ENCODE measurements at regions of chr11 and their contacts with region 1.

Region 1: DNA sequence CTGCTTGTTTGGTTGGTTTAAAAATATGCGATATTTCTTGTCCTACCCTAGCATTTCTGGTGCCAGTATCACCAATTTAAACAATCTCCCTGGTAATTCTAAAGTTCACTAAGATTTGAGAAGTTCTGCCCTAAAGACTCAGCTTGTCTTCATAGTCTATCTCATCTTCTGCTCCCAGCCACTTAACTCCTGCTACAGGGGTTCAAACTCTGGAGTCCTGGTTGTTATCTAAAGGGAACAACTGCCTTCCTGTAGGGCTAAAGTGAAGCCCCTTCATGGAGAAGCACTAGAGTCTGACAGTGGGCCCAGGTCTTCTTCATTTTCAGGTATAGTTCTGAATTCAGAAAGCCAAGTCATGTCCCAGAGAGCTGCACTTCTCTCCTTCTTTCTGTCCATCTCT is 73.2 kb downstream of the CTNND1 start:
- DNase-seq: peak in 1 of 4 experiments; percentile 19
- ATAC-seq: peak; percentile 21; the same call in 1 of the 3 replicates
- H3K4me3 ChIP-seq: no peak overlapping the region
- H3K27ac ChIP-seq: no peak overlapping the region
- H3K4me1 ChIP-seq: peaks cover 0 to 4% of the 10 kb centered on the region in 2 experiments; a peak in 2 of 5 replicates
- H3K27me3 ChIP-seq: peaks cover 0 to 7% of the 10 kb centered on the region in 2 experiments; a peak in 3 of 5 replicates
- CTCF ChIP-seq: no peak
- EP300 ChIP-seq: no peak
- POLR2A ChIP-seq: no peak
- RAD21 ChIP-seq: no peak

Region 2: GRCh38 chr11:57703341-57703740 is 131.5 kb before region 1 on chr11:
- CTCF ChIA-PET with region 1: no interaction called
- POLR2A ChIA-PET with region 1: no interaction called
- in situ Hi-C with region 1: no loop called
- intact Hi-C with region 1: no loop called
- DNase-seq: no peak
- ATAC-seq: 0 out of 3 replicates have a peak, but pooled peaks have one; percentile 11
- H3K4me3 ChIP-seq: no peak overlapping the region
- H3K27ac ChIP-seq: no peak overlapping the region
- H3K4me1 ChIP-seq: no peaks in the 10 kb centered on the region
- H3K27me3 ChIP-seq: no peaks in the 10 kb centered on the region
- CTCF ChIP-seq: no peak
- EP300 ChIP-seq: no peak
- POLR2A ChIP-seq: no peak
- RAD21 ChIP-seq: no peak

Region 3: GRCh38 chr11:58061813-58062212 is 227.0 kb after region 1 on chr11:
- CTCF ChIA-PET with region 1: no interaction called
- POLR2A ChIA-PET with region 1: no interaction called
- in situ Hi-C with region 1: no loop called
- intact Hi-C with region 1: loop called (anchors 10 kb)
- DNase-seq: no peak
- ATAC-seq: no peak
- H3K4me3 ChIP-seq: no peak overlapping the region
- H3K27ac ChIP-seq: no peak overlapping the region
- H3K4me1 ChIP-seq: no peaks in the 10 kb centered on the region
- H3K27me3 ChIP-seq: no peaks in the 10 kb centered on the region
- CTCF ChIP-seq: no peak
- EP300 ChIP-seq: no peak
- POLR2A ChIP-seq: no peak
- RAD21 ChIP-seq: no peak

Region 4: GRCh38 chr11:58513747-58514367 is 679.0 kb after region 1 on chr11:
- CTCF ChIA-PET with region 1: no interaction called
- POLR2A ChIA-PET with region 1: no interaction called
- in situ Hi-C with region 1: no loop called
- intact Hi-C with region 1: loop called (anchors 10 kb)
- DNase-seq: peak; percentile 26 to 66 (median 39)
- ATAC-seq: peak; percentile 94
- H3K4me3 ChIP-seq: no peak overlapping the region
- H3K27ac ChIP-seq: no peak overlapping the region
- H3K4me1 ChIP-seq: no peaks in the 10 kb centered on the region
- H3K27me3 ChIP-seq: no peaks in the 10 kb centered on the region
- CTCF ChIP-seq: peak; percentile 54 to 80 (median 74); a peak in 5 of 6 replicates
- EP300 ChIP-seq: no peak
- POLR2A ChIP-seq: no peak
- RAD21 ChIP-seq: peak; percentile 77 to 86

Measured in K562 (cell line).